ENCODE measurements at regions of chr1 and their contacts with region 1.

Region 1: GRCh38 chr1:158203693-158204457 is 23.2 kb downstream of the CD1D start:
- DNase-seq: no peak
- ATAC-seq: peak; percentile 68

Region 2: GRCh38 chr1:157978586-157979403 is 225.1 kb before region 1 on chr1:
- intact Hi-C with region 1: no loop called
- DNase-seq: peak; percentile 35
- ATAC-seq: peak; percentile 74

Region 3: DNA sequence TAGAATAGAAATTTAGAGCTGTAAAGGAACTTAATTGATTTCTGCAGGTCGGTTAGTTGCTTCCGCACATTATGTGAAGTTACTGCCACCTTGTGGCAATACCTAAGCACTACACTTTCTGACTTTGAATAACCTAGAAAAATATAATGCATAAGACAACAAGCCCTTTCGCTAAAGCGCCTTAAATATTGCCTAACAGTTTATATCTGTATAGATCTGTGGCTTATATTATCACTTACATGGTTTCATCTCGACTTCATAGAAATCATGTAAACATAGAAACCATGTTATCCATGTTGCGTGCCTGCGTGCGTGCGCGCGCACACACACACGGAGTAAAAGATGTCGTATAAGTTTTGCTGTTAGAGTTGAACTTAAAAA is 794.9 kb after region 1 on chr1:
- intact Hi-C with region 1: loop called (anchors 5 kb)
- DNase-seq: peak; percentile 71
- ATAC-seq: peak; percentile 50

Region 4: DNA sequence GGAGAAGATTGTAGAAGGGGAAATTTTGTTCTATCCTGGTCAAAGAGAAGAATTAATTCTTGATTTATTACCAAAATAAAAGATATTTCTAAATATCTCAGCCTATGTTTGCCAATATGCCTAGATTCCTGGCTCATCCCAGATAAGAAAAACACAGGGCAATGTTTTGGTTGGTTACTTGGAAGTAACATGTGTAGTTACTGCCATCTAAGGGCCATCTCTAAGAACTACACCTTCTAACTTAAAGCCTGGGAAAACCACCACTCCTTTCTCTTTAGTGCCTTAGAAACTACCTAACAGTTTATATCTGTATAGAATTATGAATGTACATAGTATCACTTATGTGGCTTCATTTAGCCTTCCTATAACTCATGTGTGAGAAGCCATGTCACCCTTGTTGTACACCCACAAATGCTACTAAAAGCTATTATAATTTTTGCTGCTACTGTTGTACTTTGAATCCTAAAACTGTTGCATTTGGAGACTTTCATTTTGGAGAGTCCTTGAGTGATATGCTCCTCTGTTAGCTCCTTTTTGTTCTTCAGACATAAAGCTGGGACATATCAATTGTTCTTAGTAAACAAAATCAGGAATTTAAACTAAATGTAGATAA is 868.2 kb after region 1 on chr1:
- intact Hi-C with region 1: loop called (anchors 10 kb)
- DNase-seq: no peak
- ATAC-seq: peak; percentile 50

Measured in left ventricle myocardium superior (tissue), 1 donor.